Activated B cell treated with CpG ODN at 0.5 μM for 24 hours (primary cell): ENCODE measurements at regions of chr10 and their contacts with region 1.

Region 1: GRCh38 chr10:97463363-97464132 is 17.6 kb downstream of the ZDHHC16 start:
- DNase-seq: no peak
- ATAC-seq: peak; percentile 76
- H3K4me3 Mint-ChIP-seq: no peak overlapping the region
- H3K27ac Mint-ChIP-seq: no peak overlapping the region
- H3K4me1 Mint-ChIP-seq: no peaks in the 10 kb centered on the region
- H3K27me3 Mint-ChIP-seq: no peaks in the 10 kb centered on the region
- CTCF ChIP-seq: no peak

Region 2: GRCh38 chr10:97553575-97554031 is 90.1 kb after region 1 on chr10:
- CTCF ChIA-PET with region 1: interaction called, 19 read pairs
- POLR2A ChIA-PET with region 1: no interaction called
- intact Hi-C with region 1: no loop called
- DNase-seq: peak; percentile 35
- ATAC-seq: peak; percentile 90
- H3K4me3 Mint-ChIP-seq: no peak overlapping the region
- H3K27ac Mint-ChIP-seq: no peak overlapping the region
- H3K4me1 Mint-ChIP-seq: no peaks in the 10 kb centered on the region
- H3K27me3 Mint-ChIP-seq: no peaks in the 10 kb centered on the region
- CTCF ChIP-seq: no peak